ENCODE measurements at regions of chr3 and their contacts with region 1.

Region 1: GRCh38 chr3:75180235-75180944 is 483.7 kb upstream of the FRG2C start:
- DNase-seq: peak; percentile 66
- ATAC-seq: peak; percentile 75
- H3K4me3 ChIP-seq: no peak overlapping the region
- H3K27ac ChIP-seq: peak overlapping the region; percentile 56
- H3K4me1 ChIP-seq: no peaks in the 10 kb centered on the region
- H3K27me3 ChIP-seq: no peaks in the 10 kb centered on the region
- CTCF ChIP-seq: no peak
- EP300 ChIP-seq: peak; percentile 65 to 70; a peak in 3 of 4 replicates
- POLR2A ChIP-seq: no peak
- RAD21 ChIP-seq: no peak

Region 2: DNA sequence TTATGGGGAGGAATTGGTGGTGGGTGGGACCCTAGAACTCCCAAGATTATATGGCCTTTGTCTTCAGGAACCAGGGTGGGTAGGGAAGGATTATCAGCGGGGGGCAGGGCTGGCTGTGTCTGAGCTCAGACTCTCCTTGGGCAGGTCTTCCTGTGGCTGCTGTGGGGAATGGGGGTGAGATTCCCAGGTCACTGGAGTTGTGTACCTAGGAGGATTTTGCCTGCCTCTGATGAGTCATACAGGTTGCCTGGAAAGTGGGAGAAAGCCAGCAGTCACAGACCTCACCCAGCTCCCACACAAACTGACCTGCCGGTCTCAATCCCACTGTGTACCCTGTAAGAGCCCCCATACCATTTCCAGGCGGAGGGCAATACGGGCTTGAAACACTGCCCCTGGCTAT is 356.0 kb before region 1 on chr3:
- CTCF ChIA-PET with region 1: no interaction called
- POLR2A ChIA-PET with region 1: no interaction called
- RAD21 ChIA-PET with region 1: no interaction called
- SMC1A ChIA-PET with region 1: no interaction called
- in situ Hi-C with region 1: no loop called
- intact Hi-C with region 1: no loop called
- DNase-seq: no peak
- ATAC-seq: no peak
- H3K4me3 ChIP-seq: no peak overlapping the region
- H3K27ac ChIP-seq: no peak overlapping the region
- H3K4me1 ChIP-seq: no peaks in the 10 kb centered on the region
- H3K27me3 ChIP-seq: no peaks in the 10 kb centered on the region
- CTCF ChIP-seq: no peak
- EP300 ChIP-seq: no peak
- POLR2A ChIP-seq: no peak
- RAD21 ChIP-seq: no peak

Region 3: DNA sequence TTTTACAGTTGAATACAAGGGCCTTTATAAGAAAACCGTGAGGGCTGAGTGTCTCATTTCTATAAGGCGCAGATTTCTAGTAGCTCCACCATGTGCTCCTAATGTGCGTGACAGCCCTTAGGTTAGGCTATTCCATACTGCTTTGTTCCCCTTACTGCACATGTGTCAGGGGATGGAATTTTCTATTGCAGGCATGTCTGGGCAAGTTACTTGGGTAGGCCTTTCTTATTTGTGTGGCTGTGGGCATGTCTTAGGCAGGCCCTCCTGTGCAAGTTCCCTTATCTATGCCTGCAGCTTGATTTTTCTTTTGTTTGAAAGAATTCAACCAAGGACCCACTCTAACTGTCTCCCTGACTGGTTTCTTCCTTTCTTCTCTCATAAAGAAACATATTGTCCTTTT is 131.7 kb before region 1 on chr3:
- CTCF ChIA-PET with region 1: no interaction called
- POLR2A ChIA-PET with region 1: no interaction called
- RAD21 ChIA-PET with region 1: no interaction called
- SMC1A ChIA-PET with region 1: no interaction called
- in situ Hi-C with region 1: no loop called
- intact Hi-C with region 1: no loop called
- DNase-seq: no peak
- ATAC-seq: peak; percentile 27; the same call in 2 of the 3 replicates
- H3K4me3 ChIP-seq: no peak overlapping the region
- H3K27ac ChIP-seq: no peak overlapping the region
- H3K4me1 ChIP-seq: no peaks in the 10 kb centered on the region
- H3K27me3 ChIP-seq: no peaks in the 10 kb centered on the region
- CTCF ChIP-seq: no peak
- EP300 ChIP-seq: no peak
- POLR2A ChIP-seq: no peak
- RAD21 ChIP-seq: no peak

Region 4: GRCh38 chr3:75140904-75141615 is 39.3 kb before region 1 on chr3:
- CTCF ChIA-PET with region 1: interaction called, 3 read pairs
- POLR2A ChIA-PET with region 1: interaction called, 5 read pairs
- RAD21 ChIA-PET with region 1: interaction called, 15 read pairs
- SMC1A ChIA-PET with region 1: interaction called, 5 read pairs
- in situ Hi-C with region 1: no loop called
- intact Hi-C with region 1: no loop called
- DNase-seq: no peak
- ATAC-seq: peak; percentile 78
- H3K4me3 ChIP-seq: no peak overlapping the region
- H3K27ac ChIP-seq: no peak overlapping the region
- H3K4me1 ChIP-seq: no peaks in the 10 kb centered on the region
- H3K27me3 ChIP-seq: no peaks in the 10 kb centered on the region
- CTCF ChIP-seq: peak in 2 of 3 experiments; percentile 22 to 44; a peak in 3 of 6 replicates
- EP300 ChIP-seq: no peak
- POLR2A ChIP-seq: no peak
- RAD21 ChIP-seq: peak; percentile 35; the same call in 1 of the 2 replicates

Region 5: DNA sequence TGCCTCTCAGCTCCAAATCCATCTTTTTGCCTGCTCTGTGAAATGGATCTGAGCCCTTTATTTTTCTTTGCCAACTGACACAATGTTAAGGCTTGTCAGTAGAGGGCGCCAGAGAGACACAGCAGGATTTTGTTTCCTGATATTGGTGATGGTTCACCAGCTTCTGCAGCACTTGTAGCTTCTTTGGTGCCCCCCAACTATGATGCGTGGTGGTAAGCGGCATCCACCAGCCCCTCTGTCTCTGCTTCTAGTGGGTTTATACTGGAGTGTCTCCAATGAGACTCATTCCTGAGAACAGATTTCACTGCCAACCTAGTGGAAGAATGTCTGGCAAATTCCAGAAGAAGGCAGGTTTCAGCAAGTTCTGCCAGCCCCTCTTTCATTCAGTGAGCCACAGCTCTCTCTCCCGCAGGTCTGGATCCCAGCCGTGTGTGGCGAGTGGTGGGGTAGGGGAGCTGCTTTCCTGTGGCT is 11.8 kb after region 1 on chr3:
- CTCF ChIA-PET with region 1: interaction called, 14 read pairs
- POLR2A ChIA-PET with region 1: interaction called, 4 read pairs
- RAD21 ChIA-PET with region 1: interaction called, 3 read pairs
- SMC1A ChIA-PET with region 1: interaction called, 19 read pairs
- in situ Hi-C with region 1: no loop called
- intact Hi-C with region 1: no loop called
- DNase-seq: no peak
- ATAC-seq: peak; percentile 87
- H3K4me3 ChIP-seq: no peak overlapping the region
- H3K27ac ChIP-seq: no peak overlapping the region
- H3K4me1 ChIP-seq: no peaks in the 10 kb centered on the region
- H3K27me3 ChIP-seq: no peaks in the 10 kb centered on the region
- CTCF ChIP-seq: peak; percentile 73 to 85 (median 80)
- EP300 ChIP-seq: no peak
- POLR2A ChIP-seq: no peak
- RAD21 ChIP-seq: peak; percentile 70

Measured in GM12878 (cell line).